ENCODE measurements at regions of chr5 and their contacts with region 1.

Region 1: GRCh38 chr5:151239237-151239861 is 13.6 kb upstream of the GM2A start:
- DNase-seq: peak; percentile 64 to 67
- ATAC-seq: peak; percentile 82 to 93 (median 83)
- H3K4me3 ChIP-seq: no peak overlapping the region
- H3K4me3 Mint-ChIP-seq: no peak overlapping the region
- H3K27ac ChIP-seq: no peak overlapping the region
- H3K27ac Mint-ChIP-seq: no peak overlapping the region
- H3K4me1 ChIP-seq: peaks cover 17% of the 10 kb centered on the region
- H3K4me1 Mint-ChIP-seq: peaks cover 19% of the 10 kb centered on the region in 2 donors
- H3K27me3 ChIP-seq: no peaks in the 10 kb centered on the region
- H3K27me3 Mint-ChIP-seq: no peaks in the 10 kb centered on the region
- CTCF ChIP-seq: peak; percentile 95

Region 2: GRCh38 chr5:151126199-151126645 is 113.1 kb before region 1 on chr5:
- intact Hi-C with region 1: loop called (anchors 1 kb)
- DNase-seq: peak; percentile 69 to 83
- ATAC-seq: peak; percentile 72 to 76 (median 76)
- H3K4me3 ChIP-seq: no peak overlapping the region
- H3K4me3 Mint-ChIP-seq: no peak overlapping the region
- H3K27ac ChIP-seq: peak overlapping the region; percentile 54
- H3K27ac Mint-ChIP-seq: peak overlapping the region; percentile 50 to 82
- H3K4me1 ChIP-seq: peaks cover 30% of the 10 kb centered on the region
- H3K4me1 Mint-ChIP-seq: peaks cover 34 to 43% of the 10 kb centered on the region in 2 donors
- H3K27me3 ChIP-seq: no peaks in the 10 kb centered on the region
- H3K27me3 Mint-ChIP-seq: no peaks in the 10 kb centered on the region
- CTCF ChIP-seq: peak; percentile 84

Region 3: DNA sequence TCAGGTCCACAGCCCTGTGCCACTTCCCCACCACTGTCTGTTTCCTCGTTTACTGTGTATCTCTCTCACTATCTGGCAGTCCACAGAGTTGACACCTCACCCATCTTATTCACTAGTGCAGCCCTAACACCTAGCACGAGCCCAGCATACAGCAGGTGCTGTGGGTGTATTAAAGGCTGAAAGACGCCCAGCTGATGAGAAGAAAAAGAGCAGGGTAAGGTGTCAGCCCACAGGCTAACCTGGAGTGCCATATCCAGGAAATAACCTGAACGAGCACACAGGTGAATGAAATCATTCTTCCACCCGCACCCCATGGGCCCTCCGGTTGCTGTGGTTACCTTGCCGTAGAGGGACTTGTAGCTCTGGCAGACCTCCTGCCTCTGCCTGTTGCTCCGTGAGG is 100.3 kb before region 1 on chr5:
- intact Hi-C with region 1: loop called (anchors 5 kb)
- DNase-seq: peak; percentile 56 to 72
- ATAC-seq: peak; percentile 85 to 95 (median 94)
- H3K4me3 ChIP-seq: no peak overlapping the region
- H3K4me3 Mint-ChIP-seq: peak overlapping the region; percentile 53
- H3K27ac ChIP-seq: peak overlapping the region; percentile 83
- H3K27ac Mint-ChIP-seq: peak overlapping the region; percentile 80 to 95
- H3K4me1 ChIP-seq: peaks cover 67% of the 10 kb centered on the region
- H3K4me1 Mint-ChIP-seq: peaks cover 67 to 90% of the 10 kb centered on the region in 2 donors
- H3K27me3 ChIP-seq: no peaks in the 10 kb centered on the region
- H3K27me3 Mint-ChIP-seq: no peaks in the 10 kb centered on the region
- CTCF ChIP-seq: no peak

Measured in natural killer cell (primary cell).